Heart right ventricle (tissue), 16 donors: ENCODE measurements at regions of chr1 and their contacts with region 1.

Region 1: DNA sequence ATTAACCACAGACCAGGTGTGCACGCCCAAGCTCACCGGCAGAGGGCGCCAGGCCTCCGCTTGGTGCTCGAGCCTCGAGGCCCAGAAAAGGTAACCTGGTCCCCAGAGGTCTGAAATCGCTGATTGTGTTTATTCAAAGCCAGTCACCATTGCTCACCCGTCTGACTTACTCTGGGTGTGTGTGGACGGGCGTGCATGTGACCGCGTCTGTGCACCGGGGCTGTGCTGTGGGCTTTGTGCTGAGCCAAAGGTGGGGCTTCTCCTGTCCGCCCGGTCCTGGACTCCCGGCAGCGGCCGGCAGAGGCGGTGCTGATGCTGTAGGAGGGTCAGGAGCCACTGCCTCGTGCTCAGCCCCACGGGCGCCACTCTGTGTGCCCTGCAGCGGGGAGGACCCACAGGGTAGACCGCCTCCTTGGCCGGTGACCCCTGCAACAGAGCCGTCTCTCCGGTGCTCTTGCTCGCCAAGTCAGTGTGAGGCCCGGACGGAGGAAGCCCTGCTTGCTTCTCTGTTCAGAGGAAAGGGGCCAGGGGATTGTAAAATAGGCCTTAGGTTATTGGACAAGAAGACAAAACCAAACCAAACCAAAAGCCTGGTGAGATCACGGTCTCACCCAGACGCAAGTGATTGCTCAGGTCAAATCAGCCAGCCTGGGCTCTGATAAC is 32.0 kb upstream of the BTG2 start:
- DNase-seq: peak; percentile 86 to 88
- ATAC-seq: peak; percentile 59 to 82 (median 74)
- H3K4me3 ChIP-seq: peak overlapping the region in 8 of 10 donors; percentile 17 to 47 (median 42)
- H3K27ac ChIP-seq: peak overlapping the region; percentile 26 to 94 (median 72)
- H3K4me1 ChIP-seq: peaks cover 18 to 77% (median 66%) of the 10 kb centered on the region in 9 donors
- H3K27me3 ChIP-seq: no peaks in the 10 kb centered on the region
- CTCF ChIP-seq: peak; percentile 95 to 99 (median 98)

Region 2: DNA sequence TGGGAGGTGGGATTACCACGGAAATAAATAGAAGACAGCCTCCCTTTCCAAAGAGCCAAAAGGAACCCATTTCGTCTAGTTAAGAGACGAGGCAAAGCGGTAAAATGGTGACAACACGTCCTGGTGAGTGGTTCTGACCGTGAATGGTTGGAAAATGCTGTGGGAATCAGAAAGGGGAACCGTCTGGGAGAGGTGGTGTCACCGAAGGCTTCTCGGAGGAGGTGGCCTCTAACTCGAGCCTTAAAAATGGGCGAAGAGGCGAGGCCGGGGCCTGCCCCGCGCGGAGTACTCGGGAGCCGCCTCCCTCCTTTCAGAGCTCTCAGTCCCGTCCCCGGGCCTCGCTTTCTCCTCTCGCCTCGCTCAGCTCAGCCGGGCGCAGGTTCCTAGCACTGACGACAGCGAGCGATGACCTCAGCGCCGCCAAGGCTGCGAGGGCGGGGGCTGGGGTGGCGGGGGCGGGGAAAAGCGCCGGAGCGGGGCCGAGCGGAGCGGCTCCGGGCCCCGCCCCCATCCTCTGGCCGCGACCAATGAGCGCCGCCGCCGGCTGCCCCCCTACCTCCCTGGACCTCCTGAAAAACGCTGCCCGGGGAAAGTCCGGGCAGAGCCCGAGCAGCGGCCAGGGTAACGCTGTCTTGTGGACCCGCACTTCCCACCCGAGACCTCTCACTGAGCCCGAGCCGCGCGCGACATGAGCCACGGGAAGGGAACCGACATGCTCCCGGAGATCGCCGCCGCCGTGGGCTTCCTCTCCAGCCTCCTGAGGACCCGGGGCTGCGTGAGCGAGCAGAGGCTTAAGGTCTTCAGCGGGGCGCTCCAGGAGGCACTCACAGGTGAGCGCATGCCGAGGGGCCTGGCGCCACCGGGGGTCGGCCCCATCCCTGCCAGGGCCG is 31.8 kb after region 1 on chr1 and contains the start of gene BTG2:
- intact Hi-C with region 1: loop called in 6 of 10 experiments (anchors 1 to 5 kb)
- DNase-seq: peak; percentile 94
- ATAC-seq: peak; percentile 88 to 95 (median 94)
- H3K4me3 ChIP-seq: peak within 1 kb of the TSS; percentile 73 to 100 (median 96)
- H3K27ac ChIP-seq: peak within 1 kb of the TSS; percentile 91 to 100 (median 99)
- H3K4me1 ChIP-seq: peaks cover 9 to 57% (median 43%) of the 10 kb centered on the region in 9 donors
- H3K27me3 ChIP-seq: no peaks in the 10 kb centered on the region
- CTCF ChIP-seq: no peak
- total RNA-seq, gene BTG2: 26.4 to 349 (median 58.9) TPM

Region 3: GRCh38 chr1:203326830-203327683 is 53.7 kb after region 1 on chr1:
- intact Hi-C with region 1: loop called in 7 of 10 experiments (anchors 1 to 2 kb)
- DNase-seq: peak; percentile 95
- ATAC-seq: peak; percentile 89 to 96 (median 92)
- H3K4me3 ChIP-seq: peak overlapping the region; percentile 5 to 63 (median 57)
- H3K27ac ChIP-seq: peak overlapping the region; percentile 85 to 98 (median 94)
- H3K4me1 ChIP-seq: peaks cover 24 to 64% (median 59%) of the 10 kb centered on the region in 9 donors
- H3K27me3 ChIP-seq: no peaks in the 10 kb centered on the region
- CTCF ChIP-seq: no peak

Region 4: DNA sequence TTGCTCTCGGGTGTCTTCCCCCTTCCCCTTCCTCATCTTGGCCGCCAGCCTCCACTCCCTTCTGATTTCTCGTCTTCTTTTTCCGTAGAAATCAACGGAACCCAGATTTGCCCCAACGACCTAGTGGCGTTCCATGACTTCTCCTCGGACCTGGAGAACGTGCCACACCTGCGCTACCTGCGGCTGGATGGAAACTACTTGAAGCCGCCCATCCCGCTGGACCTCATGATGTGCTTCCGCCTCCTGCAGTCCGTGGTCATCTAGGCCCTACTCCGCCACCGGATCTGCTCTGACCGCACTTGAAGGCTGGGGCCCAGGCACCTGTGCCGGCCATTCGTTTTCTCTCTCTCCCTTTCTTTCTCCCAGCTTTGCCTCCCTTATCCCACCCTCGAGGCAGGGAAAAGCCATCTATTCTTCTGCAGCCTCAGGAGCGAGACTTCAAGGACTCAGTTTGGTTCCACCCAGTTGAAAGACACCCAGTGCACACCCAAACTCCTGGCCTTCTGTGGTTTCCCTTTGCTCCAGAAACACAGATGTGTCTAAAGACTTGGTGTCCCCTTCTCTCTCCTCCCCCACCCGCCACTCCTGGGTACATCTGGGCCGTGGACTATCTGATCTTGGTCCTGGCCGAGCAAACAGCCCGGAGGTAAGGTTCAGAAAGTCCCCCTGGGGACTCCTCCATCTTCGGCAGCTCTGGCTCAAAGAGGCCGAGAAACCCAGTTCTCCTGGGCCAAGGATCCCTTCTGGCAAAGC is 213.5 kb after region 1 on chr1:
- intact Hi-C with region 1: loop called in 8 of 10 experiments (anchors 5 to 10 kb)
- DNase-seq: no peak
- ATAC-seq: peak in 6 of 8 donors; percentile 2 to 30 (median 12)
- H3K4me3 ChIP-seq: peak overlapping the region in 9 of 10 donors; percentile 16 to 51 (median 44)
- H3K27ac ChIP-seq: peak overlapping the region; percentile 72 to 91 (median 82)
- H3K4me1 ChIP-seq: peaks cover 0 to 34% (median 12%) of the 10 kb centered on the region in 9 donors
- H3K27me3 ChIP-seq: no peaks in the 10 kb centered on the region
- CTCF ChIP-seq: no peak

Region 5: GRCh38 chr1:203692565-203693470 is 419.5 kb after region 1 on chr1:
- intact Hi-C with region 1: loop called in 1 of 10 experiments (anchors 10 kb)
- DNase-seq: peak; percentile 75 to 90
- ATAC-seq: peak; percentile 88 to 95 (median 89)
- H3K4me3 ChIP-seq: peak overlapping the region in 1 of 10 donors; percentile 1
- H3K27ac ChIP-seq: peak overlapping the region; percentile 63 to 85 (median 76)
- H3K4me1 ChIP-seq: peaks cover 33 to 96% (median 65%) of the 10 kb centered on the region in 9 donors
- H3K27me3 ChIP-seq: no peaks in the 10 kb centered on the region
- CTCF ChIP-seq: peak in 2 of 9 donors; percentile 6 to 12